AG04449 (cell line): ENCODE measurements at regions of chr13 and their contacts with region 1.

Region 1: DNA sequence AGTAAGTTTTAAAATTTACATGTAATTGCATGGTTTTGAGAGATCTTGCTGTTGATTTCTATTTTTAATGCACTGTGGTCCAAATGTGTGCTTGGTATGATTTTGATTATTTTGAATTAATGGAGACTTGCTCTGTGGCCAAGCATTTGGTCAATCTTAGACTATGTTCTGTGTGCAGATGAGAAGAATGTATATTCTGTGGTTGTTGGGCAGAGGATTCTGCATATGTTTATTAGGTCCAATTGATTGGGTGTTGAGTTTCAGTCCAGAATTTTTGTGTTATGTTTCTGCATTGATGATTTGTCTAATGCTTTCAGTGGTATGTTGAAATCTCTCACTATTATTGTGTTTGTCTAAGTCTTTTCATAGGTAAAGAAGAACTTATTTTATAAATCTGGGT is 82.3 kb downstream of the TDRD3 start:
- DNase-seq: no peak
- H3K4me3 ChIP-seq: no peak overlapping the region
- CTCF ChIP-seq: no peak

Region 2: GRCh38 chr13:60617991-60618733 is 138.9 kb after region 1 on chr13:
- CTCF ChIA-PET with region 1: interaction called, 15 read pairs
- POLR2A ChIA-PET with region 1: no interaction called
- DNase-seq: no peak
- H3K4me3 ChIP-seq: no peak overlapping the region
- CTCF ChIP-seq: peak; percentile 37